Dorsolateral prefrontal cortex (tissue), 120 donors: ENCODE measurements at regions of chr1 and their contacts with region 1.

Region 1: DNA sequence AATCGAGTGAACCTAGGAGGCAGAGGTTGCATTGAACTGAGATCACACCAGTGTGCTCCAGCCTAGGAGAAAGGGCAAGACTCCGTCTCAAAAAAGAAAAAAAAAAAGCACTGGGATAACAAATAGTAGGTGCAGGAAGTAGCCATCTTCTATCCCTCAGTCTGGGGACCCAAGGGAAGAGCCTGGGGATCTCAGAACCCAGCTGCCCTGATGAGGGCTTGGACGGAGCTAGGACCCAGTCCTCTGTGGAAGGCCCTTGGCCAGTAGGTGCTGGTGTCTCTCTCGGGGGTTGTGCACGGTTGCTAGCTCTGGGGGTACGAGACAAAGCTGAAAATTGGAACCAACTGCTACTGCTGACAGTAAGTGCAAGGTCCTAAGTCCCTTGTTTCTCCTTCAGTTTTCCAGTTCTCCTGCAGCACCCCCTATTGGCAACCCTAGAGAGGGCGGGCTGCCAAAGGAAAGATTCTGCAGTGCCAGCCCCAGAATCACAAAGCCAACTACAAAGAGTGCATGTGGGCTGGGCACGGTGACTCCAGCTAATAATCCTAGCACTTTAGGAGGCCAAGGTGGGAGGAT is 57.6 kb upstream of the KIF1B start:
- DNase-seq: peak; percentile 58 to 89 (median 72)
- H3K4me3 ChIP-seq: no peak overlapping the region
- H3K27ac ChIP-seq: peak overlapping the region; percentile 34 to 92 (median 80)
- H3K27me3 ChIP-seq: no peaks in the 10 kb centered on the region
- CTCF ChIP-seq: peak in 55 of 56 donors; percentile 38 to 87 (median 72)

Region 2: DNA sequence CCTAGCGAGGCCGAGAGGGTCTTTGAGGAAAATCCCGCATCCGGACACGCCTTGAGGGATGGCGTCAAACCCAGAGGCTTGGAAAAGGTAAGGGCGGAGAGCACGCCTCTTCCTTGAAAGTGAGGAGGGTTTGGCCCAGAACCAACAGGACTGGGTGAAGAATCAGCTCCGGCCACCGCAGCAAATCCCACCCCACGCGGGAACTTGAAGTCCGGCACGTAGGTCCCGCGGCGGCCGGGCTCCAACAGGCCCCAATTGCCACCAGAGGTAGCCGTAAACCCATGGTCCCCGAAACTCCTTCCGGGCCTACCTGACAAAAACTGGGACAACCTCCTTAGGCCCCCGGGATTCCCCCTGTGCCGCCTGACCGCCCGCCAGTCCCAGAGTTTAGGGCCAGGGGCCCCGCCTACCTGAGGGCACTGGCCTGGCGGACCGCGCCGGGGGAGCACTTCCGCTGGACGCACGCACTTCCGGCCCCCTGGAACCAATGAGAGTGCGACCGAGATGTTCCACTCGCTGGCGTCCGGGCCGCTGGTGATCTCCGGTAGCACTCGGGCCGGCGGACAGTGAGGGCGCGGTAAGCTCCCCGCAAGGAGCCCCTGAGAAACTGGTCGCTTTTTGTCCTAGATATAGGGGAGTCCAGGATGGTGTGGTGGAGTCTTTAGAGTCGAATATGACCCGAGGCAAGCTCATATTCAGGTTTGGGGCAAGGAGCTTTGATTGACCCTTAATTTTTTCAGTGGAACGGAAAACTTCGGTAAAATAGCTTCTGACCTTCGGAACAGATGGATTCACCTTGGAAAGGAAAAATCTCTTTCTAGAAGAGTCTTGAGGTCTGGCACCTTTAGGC is 209.6 kb before region 1 on chr1 and contains the starts of genes LZIC and NMNAT1:
- intact Hi-C with region 1: loop called in 1 of 2 experiments (anchors 5 kb)
- DNase-seq: peak; percentile 90 to 95 (median 94)
- H3K4me3 ChIP-seq: peak within 1 kb of the TSS; percentile 70 to 99 (median 92)
- H3K27ac ChIP-seq: peak within 1 kb of the TSS; percentile 52 to 96 (median 85)
- H3K27me3 ChIP-seq: no peaks in the 10 kb centered on the region
- CTCF ChIP-seq: peak in 48 of 56 donors; percentile 2 to 68 (median 40)
- total RNA-seq, gene LZIC: 21.5 to 45.4 (median 31.9) TPM
- total RNA-seq, gene NMNAT1: 6.4 to 18.0 (median 10.1) TPM

Region 3: DNA sequence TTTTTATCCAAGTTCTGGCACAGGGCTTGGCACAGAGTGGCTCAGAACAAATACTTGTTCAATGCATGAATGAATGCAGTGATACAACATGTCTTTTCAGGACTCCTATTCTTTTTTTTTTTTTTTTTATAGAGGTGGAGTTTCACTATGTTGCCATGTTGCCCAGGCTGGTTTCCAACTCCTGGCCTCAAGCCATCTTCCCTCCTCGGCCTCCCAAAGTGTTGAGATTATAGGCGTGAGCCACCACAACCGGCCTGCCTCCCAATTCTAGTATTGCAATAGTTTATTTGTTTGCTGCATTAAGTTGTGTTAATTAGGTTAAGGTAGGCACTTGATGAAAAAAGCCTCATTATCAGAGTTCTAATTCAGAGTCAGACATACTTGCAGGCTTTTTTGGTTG is 102.2 kb before region 1 on chr1:
- intact Hi-C with region 1: loop called in 1 of 2 experiments (anchors 5 kb)
- DNase-seq: peak in 2 of 10 donors; percentile 18 to 27
- H3K4me3 ChIP-seq: no peak overlapping the region
- H3K27ac ChIP-seq: peak overlapping the region in 36 of 59 donors; percentile 4 to 89 (median 56)
- H3K27me3 ChIP-seq: no peaks in the 10 kb centered on the region
- CTCF ChIP-seq: no peak

Region 4: GRCh38 chr1:10387413-10388079 is 234.7 kb after region 1 on chr1:
- intact Hi-C with region 1: no loop called
- DNase-seq: peak in 1 of 10 donors; percentile 23
- H3K4me3 ChIP-seq: peak overlapping the region in 10 of 59 donors; percentile 1 to 31 (median 20)
- H3K27ac ChIP-seq: peak overlapping the region in 58 of 59 donors; percentile 34 to 90 (median 77)
- H3K27me3 ChIP-seq: no peaks in the 10 kb centered on the region
- CTCF ChIP-seq: peak in 2 of 56 donors; percentile 7 to 16